Ovary (tissue), 10 donors: ENCODE measurements at regions of chr9 and their contacts with region 1.

Region 1: GRCh38 chr9:130143958-130144366 is 28.2 kb upstream of the NCS1 start:
- DNase-seq: peak; percentile 47 to 68 (median 63)
- H3K4me3 ChIP-seq: no peak overlapping the region
- H3K27ac ChIP-seq: no peak overlapping the region
- H3K4me1 ChIP-seq: peaks cover 9% of the 10 kb centered on the region
- H3K27me3 ChIP-seq: no peaks in the 10 kb centered on the region
- CTCF ChIP-seq: no peak
- EP300 ChIP-seq: no peak
- POLR2A ChIP-seq: no peak

Region 2: GRCh38 chr9:130118841-130119518 is 25.0 kb before region 1 on chr9:
- intact Hi-C with region 1: loop called in 1 of 4 experiments (anchors 2 kb)
- DNase-seq: no peak
- H3K4me3 ChIP-seq: no peak overlapping the region
- H3K27ac ChIP-seq: no peak overlapping the region
- H3K4me1 ChIP-seq: no peaks in the 10 kb centered on the region
- H3K27me3 ChIP-seq: no peaks in the 10 kb centered on the region
- CTCF ChIP-seq: no peak
- EP300 ChIP-seq: no peak
- POLR2A ChIP-seq: no peak